Endothelial cell of umbilical vein (primary cell): ENCODE measurements at regions of chr18 and their contacts with region 1.

Region 1: DNA sequence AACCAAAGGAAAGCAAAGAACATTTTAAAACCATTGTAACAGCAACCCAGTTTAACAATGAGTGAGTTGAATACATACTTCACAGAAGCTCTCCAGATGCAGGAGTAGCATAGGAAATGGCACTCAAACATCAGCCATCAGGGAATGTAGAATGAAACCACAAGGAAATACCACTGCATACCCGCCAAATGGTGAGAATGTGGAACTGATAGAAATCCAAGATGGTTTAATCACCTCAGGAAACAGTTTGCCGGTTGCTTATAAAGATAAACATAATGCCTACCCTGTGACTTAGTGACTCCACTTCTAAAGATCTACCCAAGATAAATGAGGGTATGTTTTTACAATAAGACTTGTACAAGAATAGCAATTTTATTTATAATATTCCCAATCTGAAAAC is 132.0 kb downstream of the GALNT1 start:
- DNase-seq: peak; percentile 92
- H3K4me3 ChIP-seq: no peak overlapping the region
- H3K27ac ChIP-seq: peak overlapping the region; percentile 96
- H3K4me1 ChIP-seq: peaks cover 76% of the 10 kb centered on the region
- H3K27me3 ChIP-seq: no peaks in the 10 kb centered on the region
- CTCF ChIP-seq: peak in 1 of 2 donors; percentile 9
- POLR2A ChIP-seq: peak; percentile 43

Region 2: GRCh38 chr18:35240664-35241447 is 472.7 kb before region 1 on chr18 and contains the start of gene ZNF397:
- CTCF ChIA-PET with region 1: no interaction called
- POLR2A ChIA-PET with region 1: no interaction called
- dilution Hi-C with region 1: no loop called
- intact Hi-C with region 1: loop called (anchors 2 kb)
- DNase-seq: peak; percentile 97
- H3K4me3 ChIP-seq: peak within 1 kb of the TSS; percentile 55 to 73 (median 56)
- H3K27ac ChIP-seq: peak within 1 kb of the TSS; percentile 98
- H3K4me1 ChIP-seq: peaks cover 12% of the 10 kb centered on the region
- H3K27me3 ChIP-seq: no peaks in the 10 kb centered on the region
- CTCF ChIP-seq: no peak
- POLR2A ChIP-seq: peak; percentile 70
- total RNA-seq, gene ZNF397: 5.1 and 5.5 TPM in 2 replicates

Region 3: GRCh38 chr18:35296060-35296459 is 417.5 kb before region 1 on chr18:
- CTCF ChIA-PET with region 1: no interaction called
- POLR2A ChIA-PET with region 1: no interaction called
- dilution Hi-C with region 1: no loop called
- intact Hi-C with region 1: no loop called
- DNase-seq: no peak
- H3K4me3 ChIP-seq: no peak overlapping the region
- H3K27ac ChIP-seq: no peak overlapping the region
- H3K4me1 ChIP-seq: peaks cover 8% of the 10 kb centered on the region
- H3K27me3 ChIP-seq: no peaks in the 10 kb centered on the region
- CTCF ChIP-seq: no peak
- POLR2A ChIP-seq: no peak

Region 4: GRCh38 chr18:35459005-35459441 is 254.5 kb before region 1 on chr18:
- CTCF ChIA-PET with region 1: interaction called, 3 read pairs
- POLR2A ChIA-PET with region 1: interaction called, 3 read pairs
- dilution Hi-C with region 1: no loop called
- intact Hi-C with region 1: loop called (anchors 1 kb)
- DNase-seq: peak; percentile 98
- H3K4me3 ChIP-seq: no peak overlapping the region
- H3K27ac ChIP-seq: peak overlapping the region; percentile 90
- H3K4me1 ChIP-seq: peaks cover 87% of the 10 kb centered on the region
- H3K27me3 ChIP-seq: no peaks in the 10 kb centered on the region
- CTCF ChIP-seq: no peak
- POLR2A ChIP-seq: peak; percentile 86

Region 5: GRCh38 chr18:35580701-35581539 is 132.6 kb before region 1 on chr18:
- CTCF ChIA-PET with region 1: no interaction called
- POLR2A ChIA-PET with region 1: no interaction called
- dilution Hi-C with region 1: no loop called
- intact Hi-C with region 1: loop called (anchors 2 kb)
- DNase-seq: peak; percentile 58
- H3K4me3 ChIP-seq: peak overlapping the region; percentile 67 to 70 (median 67)
- H3K27ac ChIP-seq: peak overlapping the region; percentile 84
- H3K4me1 ChIP-seq: peaks cover 11% of the 10 kb centered on the region
- H3K27me3 ChIP-seq: no peaks in the 10 kb centered on the region
- CTCF ChIP-seq: no peak
- POLR2A ChIP-seq: no peak

Region 6: GRCh38 chr18:35661483-35662146 is 51.9 kb before region 1 on chr18:
- CTCF ChIA-PET with region 1: no interaction called
- POLR2A ChIA-PET with region 1: no interaction called
- dilution Hi-C with region 1: no loop called
- intact Hi-C with region 1: loop called (anchors 5 kb)
- DNase-seq: peak; percentile 47
- H3K4me3 ChIP-seq: no peak overlapping the region
- H3K27ac ChIP-seq: no peak overlapping the region
- H3K4me1 ChIP-seq: peaks cover 15% of the 10 kb centered on the region
- H3K27me3 ChIP-seq: no peaks in the 10 kb centered on the region
- CTCF ChIP-seq: no peak
- POLR2A ChIP-seq: no peak

Region 7: DNA sequence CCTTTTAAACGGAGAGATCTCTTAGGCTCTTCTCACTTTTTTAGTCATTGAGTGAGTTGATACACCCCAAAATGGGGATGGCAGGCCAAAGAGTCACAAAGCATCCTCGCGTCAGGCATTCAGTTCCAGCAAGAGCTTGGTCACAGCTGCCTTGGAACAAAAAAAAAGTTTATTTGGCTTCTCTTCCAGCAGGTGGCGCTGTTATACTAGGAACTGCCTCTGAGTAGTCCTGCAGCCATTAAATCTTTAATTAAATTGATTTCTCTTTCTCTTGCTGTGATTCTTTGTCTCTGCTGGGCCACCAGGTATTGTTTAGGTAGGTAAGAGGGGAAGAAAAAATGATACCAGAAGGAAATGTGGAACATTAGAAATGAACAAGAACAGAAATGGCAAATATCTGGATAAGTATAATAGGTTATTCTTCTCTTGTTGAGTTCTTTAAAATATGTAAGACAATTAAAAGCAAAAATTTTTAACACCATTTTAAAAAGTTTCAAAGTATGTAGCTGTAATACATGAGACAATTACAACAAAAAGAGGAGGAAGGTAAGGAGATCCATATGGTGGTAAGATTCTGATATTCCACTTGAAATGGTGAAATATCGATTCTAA is 43.1 kb after region 1 on chr18:
- CTCF ChIA-PET with region 1: interaction called, 3 read pairs
- POLR2A ChIA-PET with region 1: no interaction called
- dilution Hi-C with region 1: no loop called
- intact Hi-C with region 1: loop called (anchors 5 kb)
- DNase-seq: peak; percentile 63
- H3K4me3 ChIP-seq: no peak overlapping the region
- H3K27ac ChIP-seq: no peak overlapping the region
- H3K4me1 ChIP-seq: no peaks in the 10 kb centered on the region
- H3K27me3 ChIP-seq: peaks cover 3 to 6% of the 10 kb centered on the region in 2 experiments
- CTCF ChIP-seq: peak; percentile 58 to 75
- POLR2A ChIP-seq: no peak